ENCODE measurements at regions of chr2 and their contacts with region 1.

Region 1: GRCh38 chr2:218582076-218582475 is 13.4 kb downstream of the CNOT9 start:
- DNase-seq: no peak
- H3K4me3 ChIP-seq: no peak overlapping the region
- H3K27ac ChIP-seq: no peak overlapping the region
- H3K4me1 ChIP-seq: peaks cover 10 to 18% (median 14%) of the 10 kb centered on the region in 4 donors
- H3K27me3 ChIP-seq: no peaks in the 10 kb centered on the region
- CTCF ChIP-seq: no peak
- EP300 ChIP-seq: no peak
- POLR2A ChIP-seq: no peak

Region 2: DNA sequence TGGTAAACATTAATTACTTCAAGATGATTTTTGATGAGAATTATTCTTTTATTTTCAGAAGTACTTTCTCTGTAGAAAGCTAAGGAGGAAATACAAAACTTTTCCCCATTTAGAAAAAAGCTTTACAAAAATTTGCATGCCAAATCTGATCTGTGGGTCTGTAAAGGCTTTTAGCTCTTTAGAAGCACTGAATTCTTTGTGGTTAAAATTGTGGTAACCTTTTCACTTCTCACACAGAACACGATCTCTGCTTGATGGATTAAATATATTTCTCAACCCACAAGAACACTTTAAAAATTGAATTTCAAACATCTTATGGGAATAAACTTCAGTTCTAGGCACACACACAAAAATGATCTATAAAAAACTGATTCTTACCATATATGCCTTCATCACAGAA is 99.4 kb before region 1 on chr2:
- intact Hi-C with region 1: no loop called
- DNase-seq: no peak
- H3K4me3 ChIP-seq: no peak overlapping the region
- H3K27ac ChIP-seq: no peak overlapping the region
- H3K4me1 ChIP-seq: peaks cover 0 to 18% (median 9%) of the 10 kb centered on the region in 4 donors
- H3K27me3 ChIP-seq: no peaks in the 10 kb centered on the region
- CTCF ChIP-seq: no peak
- EP300 ChIP-seq: no peak
- POLR2A ChIP-seq: no peak

Region 3: GRCh38 chr2:218648088-218648786 is 66.2 kb after region 1 on chr2:
- intact Hi-C with region 1: loop called (anchors 5 kb)
- DNase-seq: no peak
- H3K4me3 ChIP-seq: no peak overlapping the region
- H3K27ac ChIP-seq: no peak overlapping the region
- H3K4me1 ChIP-seq: peaks cover 0 to 5% (median 0%) of the 10 kb centered on the region in 4 donors
- H3K27me3 ChIP-seq: no peaks in the 10 kb centered on the region
- CTCF ChIP-seq: peak; percentile 73 to 93 (median 75)
- EP300 ChIP-seq: no peak
- POLR2A ChIP-seq: no peak

Measured in esophagus muscularis mucosa (tissue), 4 donors.